Dorsolateral prefrontal cortex (tissue), 120 donors: ENCODE measurements at regions of chr3 and their contacts with region 1.

Region 1: DNA sequence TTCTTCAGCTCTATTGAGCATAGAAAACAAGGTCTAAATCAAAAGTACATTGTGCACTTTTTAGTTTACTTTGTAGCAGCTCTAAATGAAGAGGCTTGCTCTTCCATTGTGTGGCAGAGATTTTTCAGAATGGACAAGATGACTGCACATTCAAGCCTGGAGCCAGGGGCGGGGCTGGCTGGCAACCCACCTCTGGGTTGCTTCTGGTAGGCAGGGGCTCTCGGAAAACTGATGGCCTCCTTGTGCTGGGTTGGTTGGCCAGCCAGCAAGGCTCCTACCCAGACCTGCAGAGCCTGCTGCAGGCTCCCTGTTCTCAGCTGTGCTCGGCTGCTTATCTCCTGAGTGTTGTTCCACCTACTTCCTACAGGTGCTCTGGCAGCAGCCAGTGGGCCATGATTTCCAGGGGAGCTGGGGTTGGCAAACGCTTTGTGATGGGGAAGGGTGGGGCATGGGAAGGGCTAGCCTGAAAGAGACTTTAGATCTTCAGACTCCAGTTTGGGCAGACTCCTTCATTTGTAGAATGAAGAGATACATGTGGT is 8.8 kb downstream of the BSN start:
- DNase-seq: peak in 1 of 10 donors; percentile 35
- H3K4me3 ChIP-seq: peak overlapping the region in 2 of 59 donors; percentile 8 to 9
- H3K27ac ChIP-seq: peak overlapping the region in 26 of 59 donors; percentile 12 to 79 (median 48)
- H3K27me3 ChIP-seq: no peaks in the 10 kb centered on the region
- CTCF ChIP-seq: no peak

Region 2: DNA sequence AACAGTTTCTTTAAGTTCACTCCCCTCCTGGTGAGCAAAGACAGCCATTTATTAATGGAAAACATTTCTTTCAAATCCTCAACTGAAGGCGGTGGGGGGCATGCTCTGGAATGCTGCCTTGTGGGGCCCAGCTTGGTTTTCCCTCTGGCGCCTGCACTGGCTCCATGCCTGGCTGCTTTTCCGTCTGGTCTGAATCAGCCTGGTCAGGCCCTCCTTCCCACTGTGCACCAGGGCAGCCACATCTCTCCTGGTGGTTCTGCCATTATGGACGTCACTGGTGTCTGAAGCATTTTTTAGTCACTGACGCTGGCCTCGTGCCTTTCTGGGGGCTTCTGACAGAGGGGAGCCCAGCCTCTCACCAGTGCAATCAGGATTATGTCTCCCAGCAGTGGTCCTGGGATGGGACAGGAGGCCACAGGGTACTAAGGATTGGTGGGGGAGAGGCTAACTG is 53.4 kb after region 1 on chr3:
- intact Hi-C with region 1: loop called in 1 of 2 experiments (anchors 5 kb)
- DNase-seq: peak in 2 of 10 donors; percentile 42 to 72
- H3K4me3 ChIP-seq: no peak overlapping the region
- H3K27ac ChIP-seq: peak overlapping the region in 30 of 59 donors; percentile 8 to 67 (median 38)
- H3K27me3 ChIP-seq: no peaks in the 10 kb centered on the region
- CTCF ChIP-seq: no peak